CD4-positive, alpha-beta T cell (primary cell): ENCODE measurements at regions of chr3 and their contacts with region 1.

Region 1: GRCh38 chr3:20039766-20040475 is at the start of gene KAT2B:
- DNase-seq: peak; percentile 66 to 94 (median 81)
- ATAC-seq: peak; percentile 66
- H3K4me3 ChIP-seq: peak within 1 kb of the TSS; percentile 94
- H3K4me3 Mint-ChIP-seq: peak within 1 kb of the TSS; percentile 99
- H3K27ac ChIP-seq: peak within 1 kb of the TSS; percentile 86 to 90
- H3K27ac Mint-ChIP-seq: peak within 1 kb of the TSS; percentile 99
- H3K4me1 ChIP-seq: peaks cover 51% of the 10 kb centered on the region
- H3K4me1 Mint-ChIP-seq: peaks cover 60% of the 10 kb centered on the region
- H3K27me3 ChIP-seq: no peaks in the 10 kb centered on the region
- H3K27me3 Mint-ChIP-seq: no peaks in the 10 kb centered on the region
- CTCF ChIP-seq: peak; percentile 90
- total RNA-seq, gene KAT2B: 50.9 to 54.4 TPM

Region 2: GRCh38 chr3:19946832-19947548 is 92.9 kb before region 1 on chr3 and contains the start of gene RAB5A:
- CTCF ChIA-PET with region 1: no interaction called
- POLR2A ChIA-PET with region 1: interaction called, 48 read pairs
- intact Hi-C with region 1: loop called (anchors 1 to 2 kb)
- DNase-seq: peak; percentile 91 to 99 (median 96)
- ATAC-seq: peak; percentile 74
- H3K4me3 ChIP-seq: peak within 1 kb of the TSS; percentile 97
- H3K4me3 Mint-ChIP-seq: peak within 1 kb of the TSS; percentile 100
- H3K27ac ChIP-seq: peak within 1 kb of the TSS; percentile 94 to 98
- H3K27ac Mint-ChIP-seq: peak within 1 kb of the TSS; percentile 97
- H3K4me1 ChIP-seq: peaks cover 34% of the 10 kb centered on the region
- H3K4me1 Mint-ChIP-seq: peaks cover 60% of the 10 kb centered on the region
- H3K27me3 ChIP-seq: no peaks in the 10 kb centered on the region
- H3K27me3 Mint-ChIP-seq: no peaks in the 10 kb centered on the region
- CTCF ChIP-seq: no peak
- total RNA-seq, gene RAB5A: 120 to 125 TPM

Region 3: GRCh38 chr3:20054549-20054987 is 14.6 kb after region 1 on chr3:
- CTCF ChIA-PET with region 1: interaction called, 15 read pairs
- POLR2A ChIA-PET with region 1: interaction called, 47 read pairs
- intact Hi-C with region 1: loop called in 1 of 2 experiments (anchors 2 kb)
- DNase-seq: peak in 13 of 14 experiments; percentile 27 to 86 (median 56)
- ATAC-seq: peak; percentile 87
- H3K4me3 ChIP-seq: no peak overlapping the region
- H3K4me3 Mint-ChIP-seq: no peak overlapping the region
- H3K27ac ChIP-seq: peak overlapping the region; percentile 15 to 19
- H3K27ac Mint-ChIP-seq: no peak overlapping the region
- H3K4me1 ChIP-seq: peaks cover 68% of the 10 kb centered on the region
- H3K4me1 Mint-ChIP-seq: peaks cover 29% of the 10 kb centered on the region
- H3K27me3 ChIP-seq: no peaks in the 10 kb centered on the region
- H3K27me3 Mint-ChIP-seq: no peaks in the 10 kb centered on the region
- CTCF ChIP-seq: no peak

Region 4: GRCh38 chr3:20104167-20104661 is 64.3 kb after region 1 on chr3:
- CTCF ChIA-PET with region 1: interaction called, 4 read pairs
- POLR2A ChIA-PET with region 1: interaction called, 15 read pairs
- intact Hi-C with region 1: loop called in 1 of 2 experiments (anchors 10 kb)
- DNase-seq: peak in 10 of 14 experiments; percentile 3 to 87 (median 14)
- ATAC-seq: peak; percentile 81
- H3K4me3 ChIP-seq: no peak overlapping the region
- H3K4me3 Mint-ChIP-seq: peak overlapping the region; percentile 63
- H3K27ac ChIP-seq: peak overlapping the region in 1 of 2 donors; percentile 59
- H3K27ac Mint-ChIP-seq: peak overlapping the region; percentile 86
- H3K4me1 ChIP-seq: peaks cover 50% of the 10 kb centered on the region
- H3K4me1 Mint-ChIP-seq: peaks cover 49% of the 10 kb centered on the region
- H3K27me3 ChIP-seq: no peaks in the 10 kb centered on the region
- H3K27me3 Mint-ChIP-seq: no peaks in the 10 kb centered on the region
- CTCF ChIP-seq: no peak